Calu3 (cell line): ENCODE measurements at regions of chr10 and their contacts with region 1.

Region 1: DNA sequence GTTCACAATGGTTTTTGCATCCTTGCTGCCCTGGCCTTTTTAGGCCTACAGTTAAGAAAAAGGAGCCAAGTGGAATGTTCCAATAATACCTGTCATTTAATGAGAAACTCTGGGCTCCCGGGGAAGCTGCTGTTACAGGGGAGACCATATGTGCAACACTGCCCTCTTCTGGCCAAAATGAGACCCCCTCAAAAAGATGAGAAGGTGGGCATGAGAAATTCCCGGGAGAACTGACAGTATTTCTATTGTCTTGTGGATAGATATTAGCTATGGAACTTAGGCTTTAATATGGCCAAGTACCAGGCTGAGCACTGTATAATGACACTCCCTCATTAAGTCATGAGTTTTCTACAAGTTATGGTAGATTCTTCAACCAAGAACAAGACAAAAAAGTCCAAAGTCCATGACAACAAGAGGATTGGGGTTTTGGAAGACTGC is 99.4 kb downstream of the CCDC3 start:
- DNase-seq: peak; percentile 66
- H3K4me3 Mint-ChIP-seq: no peak overlapping the region
- H3K27ac Mint-ChIP-seq: no peak overlapping the region
- H3K4me1 Mint-ChIP-seq: peaks cover 9% of the 10 kb centered on the region
- H3K27me3 Mint-ChIP-seq: peaks cover 89% of the 10 kb centered on the region
- CTCF ChIP-seq: peak; percentile 79

Region 2: GRCh38 chr10:12617191-12618175 is 284.7 kb before region 1 on chr10:
- CTCF ChIA-PET with region 1: no interaction called
- intact Hi-C with region 1: no loop called
- DNase-seq: no peak
- H3K4me3 Mint-ChIP-seq: no peak overlapping the region
- H3K27ac Mint-ChIP-seq: no peak overlapping the region
- H3K4me1 Mint-ChIP-seq: no peaks in the 10 kb centered on the region
- H3K27me3 Mint-ChIP-seq: peaks cover 49% of the 10 kb centered on the region
- CTCF ChIP-seq: no peak

Region 3: GRCh38 chr10:12628964-12629766 is 273.0 kb before region 1 on chr10:
- CTCF ChIA-PET with region 1: no interaction called
- intact Hi-C with region 1: no loop called
- DNase-seq: no peak
- H3K4me3 Mint-ChIP-seq: no peak overlapping the region
- H3K27ac Mint-ChIP-seq: no peak overlapping the region
- H3K4me1 Mint-ChIP-seq: no peaks in the 10 kb centered on the region
- H3K27me3 Mint-ChIP-seq: peaks cover 82% of the 10 kb centered on the region
- CTCF ChIP-seq: no peak

Region 4: DNA sequence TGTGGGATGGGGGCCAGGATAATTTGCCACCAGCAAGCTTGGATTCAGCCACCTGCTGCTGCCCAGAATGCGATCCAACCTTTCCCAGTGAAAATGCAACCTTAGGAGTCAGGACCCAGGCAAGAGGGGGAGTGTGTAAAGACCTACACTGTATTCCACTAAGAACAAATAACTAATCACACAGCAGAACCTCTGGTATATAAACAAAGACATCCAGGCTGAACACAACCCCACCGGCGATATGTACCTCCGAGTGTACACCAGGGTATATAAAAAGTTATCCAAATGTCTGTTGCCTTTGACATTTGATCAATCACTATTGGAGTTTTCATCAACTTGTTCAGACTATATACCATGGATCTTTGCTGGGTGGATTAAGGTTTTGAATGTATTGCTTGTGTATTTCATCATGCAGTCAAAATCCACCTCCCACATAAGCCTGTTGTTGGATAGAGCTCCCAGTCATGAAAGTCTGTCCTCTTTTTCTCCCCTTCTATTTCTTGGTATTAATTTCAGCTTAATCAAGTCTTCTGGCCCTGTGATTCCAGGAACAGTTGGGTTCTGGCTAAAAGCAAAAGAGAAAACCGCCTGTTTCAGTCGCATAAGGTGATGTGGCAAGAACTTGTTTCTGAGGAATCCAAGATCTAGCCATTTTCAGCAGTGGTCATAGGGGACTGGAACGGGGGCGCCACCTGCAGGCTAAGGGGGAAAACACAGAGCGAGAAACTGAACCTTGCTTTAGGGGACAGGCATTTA is 191.4 kb before region 1 on chr10:
- CTCF ChIA-PET with region 1: interaction called, 9 read pairs
- intact Hi-C with region 1: loop called (anchors 2 kb)
- DNase-seq: peak; percentile 82
- H3K4me3 Mint-ChIP-seq: no peak overlapping the region
- H3K27ac Mint-ChIP-seq: peak overlapping the region; percentile 79
- H3K4me1 Mint-ChIP-seq: peaks cover 46% of the 10 kb centered on the region
- H3K27me3 Mint-ChIP-seq: no peaks in the 10 kb centered on the region
- CTCF ChIP-seq: peak; percentile 76

Region 5: DNA sequence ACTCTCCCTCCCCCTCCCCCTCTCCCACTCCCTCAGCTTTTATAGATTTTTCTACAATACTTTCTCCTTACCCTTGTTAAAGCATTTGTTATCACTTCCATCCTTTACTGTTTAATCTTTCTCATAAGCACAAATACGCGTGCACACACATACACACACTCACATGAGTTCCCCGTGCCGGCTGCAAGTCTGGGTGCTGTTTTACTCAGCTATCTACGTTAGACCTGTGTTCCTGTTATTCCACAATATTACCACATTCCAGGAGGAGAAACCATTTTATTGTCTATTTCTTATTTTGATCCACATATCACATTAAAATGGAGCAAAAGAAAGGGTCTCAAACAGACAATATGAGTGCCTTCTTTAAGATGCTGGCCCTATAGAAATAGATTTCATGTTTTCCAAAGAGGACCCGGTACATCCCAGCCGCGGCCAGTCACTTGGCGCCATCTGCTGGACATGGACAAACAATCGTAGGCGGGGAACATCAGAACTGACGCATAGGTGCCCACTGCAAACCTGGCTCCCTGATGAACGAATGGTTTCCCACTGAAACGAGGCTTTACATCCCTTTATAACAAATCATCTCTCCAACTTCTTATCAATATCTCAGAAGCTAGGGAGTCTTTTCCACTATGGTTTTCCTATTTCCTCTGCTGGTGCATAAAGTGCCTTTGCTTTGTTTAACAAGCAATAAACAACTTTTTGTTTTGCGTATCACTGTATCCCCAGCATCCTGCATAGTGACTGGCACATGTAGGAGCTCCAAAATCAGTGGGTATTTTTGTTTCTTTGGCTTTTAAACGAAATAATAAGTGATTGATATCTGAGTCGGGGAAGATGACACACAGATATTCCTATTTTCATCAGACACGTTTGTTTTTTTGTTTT is 172.7 kb after region 1 on chr10:
- CTCF ChIA-PET with region 1: no interaction called
- intact Hi-C with region 1: loop called (anchors 10 kb)
- DNase-seq: peak; percentile 75
- H3K4me3 Mint-ChIP-seq: no peak overlapping the region
- H3K27ac Mint-ChIP-seq: no peak overlapping the region
- H3K4me1 Mint-ChIP-seq: no peaks in the 10 kb centered on the region
- H3K27me3 Mint-ChIP-seq: peaks cover 68% of the 10 kb centered on the region
- CTCF ChIP-seq: peak; percentile 62